Activated T-helper 1 cell treated with anti-CD3 and anti-CD28 coated beads, Interleukin-12 subunit alpha, Interleukin-12 subunit beta, Interleukin-2, Interleukin-4 antibody, amounts not matched to agents 30 ng/mL and 10 ng/mL and 1 ng/mL, durations not matched to agents 14 hours and 24 hours and 36 hours (primary cell): ENCODE measurements at regions of chr9 and their contacts with region 1.

Region 1: DNA sequence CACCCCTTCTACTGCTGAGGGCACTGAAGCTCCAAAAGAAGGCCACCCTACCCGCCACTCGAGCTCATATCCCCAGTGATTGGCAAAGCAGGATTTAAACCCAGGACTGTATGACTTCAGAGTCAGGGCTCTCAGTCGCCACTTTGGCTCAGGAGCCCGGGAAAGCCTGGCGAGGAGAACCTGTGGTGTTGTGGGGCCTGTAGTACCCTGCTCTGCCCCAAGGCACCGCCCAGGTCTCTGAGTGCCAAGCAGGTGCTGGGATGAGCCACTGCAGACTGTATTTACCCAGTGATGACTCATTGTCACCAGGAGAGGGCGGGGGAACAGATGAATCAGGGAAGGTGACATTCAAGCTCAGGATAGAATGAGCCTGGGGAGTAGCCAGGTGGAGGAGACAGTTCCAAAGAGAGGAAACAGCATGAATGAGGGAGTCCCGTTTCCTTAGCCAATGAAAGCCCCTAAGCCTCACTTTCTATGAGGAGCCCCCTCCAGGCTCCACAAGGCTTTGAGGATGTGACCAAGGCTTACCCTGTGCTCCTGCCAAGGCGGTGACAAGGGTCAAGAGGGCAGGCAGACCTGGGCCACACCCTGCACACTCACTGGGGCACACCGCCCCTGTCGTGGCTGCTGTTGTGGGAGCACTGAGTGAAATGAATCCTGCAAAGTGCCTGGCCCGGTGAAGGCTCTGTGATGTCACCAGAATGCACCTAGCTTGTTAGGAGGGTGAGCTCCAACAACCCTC is 17.8 kb upstream of the DPM2 start:
- DNase-seq: peak; percentile 56
- H3K4me3 Mint-ChIP-seq: peak overlapping the region; percentile 12
- H3K27ac Mint-ChIP-seq: peak overlapping the region; percentile 73
- H3K4me1 Mint-ChIP-seq: peaks cover 74% of the 10 kb centered on the region
- H3K27me3 Mint-ChIP-seq: peaks cover 2% of the 10 kb centered on the region

Region 2: DNA sequence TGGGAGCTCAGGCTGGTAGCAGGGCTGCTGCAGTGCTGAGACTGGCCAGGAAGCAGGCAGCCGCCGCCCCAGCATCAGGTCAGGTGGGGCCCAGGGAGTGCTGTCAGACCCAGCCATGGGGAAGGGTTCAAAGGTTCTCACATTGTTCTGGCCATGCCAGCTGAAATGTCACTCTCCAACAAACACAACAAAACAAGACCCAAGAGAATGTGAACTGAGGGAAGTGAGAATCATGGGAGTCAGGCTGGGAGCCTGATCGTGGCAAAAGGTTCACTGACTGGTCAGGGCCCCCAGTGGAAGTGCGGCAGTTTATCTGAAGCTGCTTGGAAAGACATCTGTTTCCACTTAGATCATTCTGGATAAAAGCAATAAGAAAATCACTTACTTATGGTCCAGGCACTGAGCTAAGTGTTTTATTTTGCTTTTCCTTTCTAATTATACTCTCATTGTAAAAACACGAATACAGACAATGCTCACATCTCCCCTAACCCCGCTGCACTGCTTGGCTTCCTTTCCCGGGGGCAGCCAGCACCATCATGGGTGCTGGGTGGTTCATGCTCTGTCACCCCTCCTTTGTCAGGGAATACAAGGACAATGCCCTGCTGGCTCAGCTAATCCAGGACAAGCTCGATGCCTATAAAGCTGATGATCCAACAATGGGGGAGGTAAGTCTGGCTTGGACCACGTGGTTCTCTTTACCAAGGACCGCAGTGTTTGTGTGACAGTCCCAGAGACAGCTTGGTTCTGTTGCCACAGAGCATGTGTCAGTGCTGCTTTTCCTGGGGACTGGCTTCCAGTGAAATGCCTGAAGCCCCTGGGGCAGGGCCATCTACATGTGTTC is 290.6 kb before region 1 on chr9:
- intact Hi-C with region 1: no loop called
- DNase-seq: no peak
- H3K4me3 Mint-ChIP-seq: no peak overlapping the region
- H3K27ac Mint-ChIP-seq: no peak overlapping the region
- H3K4me1 Mint-ChIP-seq: no peaks in the 10 kb centered on the region
- H3K27me3 Mint-ChIP-seq: peaks cover 1% of the 10 kb centered on the region

Region 3: GRCh38 chr9:127770905-127771569 is 184.4 kb before region 1 on chr9:
- intact Hi-C with region 1: no loop called
- DNase-seq: peak; percentile 99
- H3K4me3 Mint-ChIP-seq: peak overlapping the region; percentile 86
- H3K27ac Mint-ChIP-seq: peak overlapping the region; percentile 90
- H3K4me1 Mint-ChIP-seq: peaks cover 63% of the 10 kb centered on the region
- H3K27me3 Mint-ChIP-seq: no peaks in the 10 kb centered on the region

Region 4: DNA sequence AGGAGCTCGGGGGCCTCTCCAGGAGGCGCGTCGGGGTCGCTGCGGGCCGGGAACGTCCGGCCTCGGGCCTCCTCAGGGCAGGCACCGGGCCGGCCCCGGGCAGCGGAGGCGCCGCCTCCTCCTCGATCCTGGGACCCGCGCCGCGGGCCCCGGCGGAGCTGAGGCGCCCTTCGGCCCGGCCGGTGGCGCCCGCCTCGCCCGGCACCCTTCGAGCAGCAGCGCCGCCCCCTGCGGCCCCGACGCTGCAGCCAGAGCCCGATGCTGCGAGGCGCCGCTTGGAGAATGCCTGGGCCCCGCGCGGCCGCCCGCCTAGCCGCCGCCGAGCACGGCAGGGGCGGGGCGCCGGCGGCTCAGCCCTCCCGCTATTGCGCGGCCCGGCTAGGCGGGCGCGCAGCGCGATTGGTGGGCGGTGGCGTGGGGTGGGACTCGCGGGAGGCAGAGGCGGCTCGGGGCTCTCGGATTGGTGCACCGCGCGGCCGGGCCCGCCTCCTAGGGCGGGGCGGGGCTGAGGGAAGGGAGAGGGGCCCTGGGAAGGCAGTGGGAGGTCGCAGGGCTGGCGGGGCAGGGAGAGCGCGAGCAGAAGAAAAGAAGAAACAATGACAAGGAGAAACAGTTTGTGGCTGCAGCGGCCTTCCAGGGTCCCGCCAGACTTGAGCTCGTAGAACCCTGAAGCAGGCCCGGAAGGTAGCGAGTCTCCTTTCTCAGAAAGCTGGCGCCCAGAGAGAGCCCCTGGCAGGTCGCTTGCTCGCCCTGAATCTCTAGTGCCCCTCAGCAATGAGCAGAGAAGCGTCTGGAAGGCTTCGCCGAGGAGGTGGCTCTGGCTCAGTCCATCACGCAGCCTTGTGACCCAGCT is 25.5 kb after region 1 on chr9 and contains the start of gene EEIG1:
- intact Hi-C with region 1: loop called (anchors 1 kb)
- DNase-seq: peak; percentile 98
- H3K4me3 Mint-ChIP-seq: peak within 1 kb of the TSS; percentile 93
- H3K27ac Mint-ChIP-seq: peak within 1 kb of the TSS; percentile 84
- H3K4me1 Mint-ChIP-seq: peaks cover 48% of the 10 kb centered on the region
- H3K27me3 Mint-ChIP-seq: no peaks in the 10 kb centered on the region
- total RNA-seq, gene EEIG1: 39.8 and 43.4 TPM in 2 replicates

Region 5: DNA sequence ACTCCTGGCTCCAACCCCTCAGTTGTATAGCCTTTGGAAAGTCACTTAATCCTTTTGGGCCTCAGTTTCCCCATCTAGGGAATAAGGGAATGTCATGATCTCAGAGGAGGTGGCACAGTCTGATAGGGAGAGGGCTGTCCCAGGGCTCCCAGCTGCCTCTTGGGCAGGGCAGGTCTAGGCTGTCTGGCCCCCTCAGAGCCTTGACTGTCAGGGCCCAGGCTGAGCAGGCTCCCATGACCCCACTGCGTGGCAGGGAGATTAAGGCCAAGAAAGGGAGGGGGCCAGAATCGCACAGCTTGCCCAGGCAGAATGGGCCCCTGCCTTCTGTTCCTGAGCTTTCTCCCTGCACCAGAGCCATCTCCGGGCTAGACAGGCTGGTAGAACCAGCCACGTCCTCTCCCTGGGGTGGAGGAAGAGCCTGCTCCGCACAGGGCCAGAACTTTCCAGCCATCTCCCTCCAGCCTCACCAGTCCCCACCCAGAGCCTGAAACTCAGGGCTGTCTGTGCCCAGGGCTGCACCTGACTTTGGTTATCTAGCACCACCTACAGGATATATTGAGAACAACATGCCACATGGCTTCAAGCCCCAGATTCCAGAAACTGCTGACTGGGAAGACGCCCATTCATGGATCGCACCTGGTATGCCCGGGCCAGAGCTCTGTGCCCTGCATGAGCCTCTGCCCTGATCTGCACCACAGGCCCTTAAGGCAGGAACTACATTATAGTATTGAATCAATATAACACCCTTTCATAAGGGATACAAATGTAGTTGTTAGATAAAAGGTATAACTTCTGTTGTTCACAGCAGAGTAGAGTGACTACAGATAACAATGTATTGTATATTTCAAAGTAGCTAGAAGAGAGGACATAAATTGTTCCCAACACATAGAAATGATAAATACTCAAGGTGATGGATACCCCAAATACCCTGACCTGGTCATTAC is 79.6 kb after region 1 on chr9:
- intact Hi-C with region 1: loop called (anchors 1 kb)
- DNase-seq: peak; percentile 62
- H3K4me3 Mint-ChIP-seq: no peak overlapping the region
- H3K27ac Mint-ChIP-seq: no peak overlapping the region
- H3K4me1 Mint-ChIP-seq: peaks cover 36% of the 10 kb centered on the region
- H3K27me3 Mint-ChIP-seq: peaks cover 9% of the 10 kb centered on the region

Region 6: DNA sequence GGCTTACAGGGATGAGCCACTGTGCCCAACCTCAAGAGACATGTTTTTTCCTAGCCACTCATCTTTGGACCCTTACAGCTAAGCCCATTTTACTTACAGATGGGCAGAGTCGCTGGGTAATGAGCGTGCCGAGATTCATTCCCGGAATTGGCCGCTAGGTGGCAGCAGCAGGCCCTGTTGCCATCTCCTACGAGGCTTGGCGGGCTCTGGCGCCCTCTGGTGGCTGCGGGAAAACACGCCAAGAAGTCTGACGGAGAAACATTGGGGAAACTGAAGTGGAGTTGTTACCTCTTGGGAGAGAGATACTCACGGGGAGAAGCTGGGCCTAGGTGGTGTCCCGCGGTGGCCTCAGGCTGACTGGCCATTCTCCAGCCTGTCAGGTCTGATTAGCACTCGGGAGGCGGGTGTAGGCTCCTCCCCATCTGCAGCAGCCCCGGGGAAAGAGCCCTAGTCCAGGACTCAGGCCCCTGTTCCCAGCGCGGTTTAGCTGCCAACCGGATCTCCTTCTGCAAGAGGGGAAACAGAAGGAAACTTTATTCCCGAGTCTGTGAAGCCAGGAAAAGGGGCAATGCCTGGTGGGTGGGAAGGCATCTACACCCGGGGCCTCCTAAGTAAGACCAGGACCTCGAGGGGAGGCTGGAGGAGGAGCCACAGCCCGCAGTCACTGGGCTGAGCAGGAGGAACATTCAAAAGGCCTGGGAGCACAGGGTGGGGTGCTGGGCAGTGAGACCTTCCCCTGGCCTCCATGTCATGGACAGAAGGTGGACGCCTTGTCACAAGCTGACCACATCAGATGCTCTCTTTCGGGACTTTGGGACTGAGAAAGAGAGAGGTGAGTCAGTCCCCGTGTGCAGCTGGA is 162.4 kb after region 1 on chr9:
- intact Hi-C with region 1: loop called (anchors 5 kb)
- DNase-seq: peak; percentile 88
- H3K4me3 Mint-ChIP-seq: no peak overlapping the region
- H3K27ac Mint-ChIP-seq: peak overlapping the region; percentile 66
- H3K4me1 Mint-ChIP-seq: peaks cover 12% of the 10 kb centered on the region
- H3K27me3 Mint-ChIP-seq: no peaks in the 10 kb centered on the region